Psoas muscle (tissue), 8 donors: ENCODE measurements at regions of chr15 and their contacts with region 1.

Region 1: DNA sequence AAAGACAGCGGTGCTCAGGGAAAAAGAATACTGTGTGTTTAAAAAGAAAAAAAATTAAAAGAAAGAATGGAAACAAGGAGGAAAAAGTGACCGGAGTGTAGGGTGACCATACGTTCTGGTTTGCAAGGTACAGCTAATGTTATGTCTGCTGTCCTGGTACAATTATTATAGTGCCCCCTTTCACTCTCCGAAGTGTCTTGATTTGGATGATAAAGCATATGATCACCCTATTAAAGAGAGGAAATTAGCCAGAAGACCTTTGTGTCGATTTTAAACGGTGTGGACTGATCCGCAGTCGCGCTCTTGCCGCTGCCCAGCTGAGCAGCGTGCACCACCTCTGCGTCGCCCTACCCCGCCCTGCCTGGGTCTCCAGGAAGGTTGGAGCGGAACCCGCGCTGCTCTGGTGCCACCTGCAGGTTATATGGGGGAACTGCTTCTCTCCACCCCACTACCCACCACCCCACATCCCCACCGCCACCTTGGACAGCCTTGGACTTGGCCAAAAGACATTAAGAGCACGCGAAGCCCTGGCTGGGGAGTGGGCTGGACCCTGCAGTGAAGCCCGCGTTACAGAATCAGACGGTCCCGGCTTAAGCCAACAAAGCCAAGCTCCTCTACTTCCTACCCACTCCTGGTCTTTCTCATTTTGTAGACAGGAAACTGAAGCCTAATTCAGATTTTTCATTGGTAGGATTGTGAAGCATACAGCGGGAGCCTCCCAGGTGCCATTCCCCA is 41.2 kb upstream of the UBE2Q2 start:
- DNase-seq: peak; percentile 80 to 91
- ATAC-seq: peak; percentile 98 to 100 (median 99)
- H3K4me3 ChIP-seq: peak overlapping the region; percentile 48
- H3K27ac ChIP-seq: no peak overlapping the region
- H3K4me1 ChIP-seq: no peaks in the 10 kb centered on the region
- H3K27me3 ChIP-seq: no peaks in the 10 kb centered on the region
- CTCF ChIP-seq: peak; percentile 90

Region 2: GRCh38 chr15:75723847-75724660 is 78.0 kb before region 1 on chr15:
- intact Hi-C with region 1: loop called (anchors 2 kb)
- DNase-seq: peak; percentile 85 to 91
- ATAC-seq: peak; percentile 34 to 68 (median 44)
- H3K4me3 ChIP-seq: no peak overlapping the region
- H3K27ac ChIP-seq: peak overlapping the region; percentile 30
- H3K4me1 ChIP-seq: no peaks in the 10 kb centered on the region
- H3K27me3 ChIP-seq: no peaks in the 10 kb centered on the region
- CTCF ChIP-seq: no peak

Region 3: DNA sequence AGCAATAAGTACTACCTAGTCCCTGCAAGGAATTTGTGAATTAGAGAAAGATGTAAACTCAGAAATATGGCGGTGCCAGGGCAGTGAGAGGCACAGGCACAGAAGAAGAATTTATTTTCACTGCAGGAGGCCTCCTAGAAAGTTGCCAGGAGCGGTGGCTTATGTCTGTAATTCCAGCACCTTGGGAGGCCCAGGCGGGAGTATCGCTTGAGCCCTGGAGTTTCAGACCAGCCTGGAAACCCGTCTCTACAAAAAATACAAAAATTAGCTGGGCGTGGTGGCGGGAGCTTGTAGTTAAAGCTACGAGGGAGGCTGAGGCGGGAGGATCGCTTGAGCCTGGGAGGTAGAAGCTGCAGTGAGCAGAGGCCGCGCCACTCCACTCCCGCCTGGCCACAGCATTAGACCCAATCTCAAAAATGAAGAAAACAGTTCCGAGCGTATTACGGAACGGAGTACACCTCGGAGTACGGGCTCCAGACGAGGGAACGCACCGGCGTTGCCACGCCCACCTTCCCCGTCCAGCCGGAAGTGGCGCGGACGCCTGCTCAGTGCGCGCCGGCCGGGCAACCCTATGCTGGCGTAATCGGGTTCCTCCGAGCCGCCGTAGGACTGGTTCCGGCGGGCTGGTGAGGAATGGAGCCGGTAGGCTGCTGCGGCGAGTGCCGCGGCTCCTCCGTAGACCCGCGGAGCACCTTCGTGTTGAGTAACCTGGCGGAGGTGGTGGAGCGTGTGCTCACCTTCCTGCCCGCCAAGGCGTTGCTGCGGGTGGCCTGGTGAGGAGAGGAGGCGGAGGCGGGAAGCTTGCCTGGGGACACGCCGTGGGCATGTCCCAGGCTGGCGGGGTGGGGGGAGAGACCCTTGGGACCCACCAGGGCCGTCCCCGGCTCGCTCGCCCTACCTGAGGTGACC is 101.6 kb after region 1 on chr15 and contains the start of gene FBXO22:
- intact Hi-C with region 1: no loop called
- DNase-seq: peak; percentile 92 to 95
- ATAC-seq: peak; percentile 98 to 100 (median 98)
- H3K4me3 ChIP-seq: peak within 1 kb of the TSS; percentile 99
- H3K27ac ChIP-seq: peak within 1 kb of the TSS; percentile 78
- H3K4me1 ChIP-seq: peaks cover 13% of the 10 kb centered on the region
- H3K27me3 ChIP-seq: no peaks in the 10 kb centered on the region
- CTCF ChIP-seq: no peak
- total RNA-seq, gene FBXO22: 13.9 to 16.8 (median 14.9) TPM